Activated CD4-positive, alpha-beta memory T cell treated with anti-CD3 and anti-CD28 coated beads for 36 hours (primary cell): ENCODE measurements at regions of chr7 and their contacts with region 1.

Region 1: DNA sequence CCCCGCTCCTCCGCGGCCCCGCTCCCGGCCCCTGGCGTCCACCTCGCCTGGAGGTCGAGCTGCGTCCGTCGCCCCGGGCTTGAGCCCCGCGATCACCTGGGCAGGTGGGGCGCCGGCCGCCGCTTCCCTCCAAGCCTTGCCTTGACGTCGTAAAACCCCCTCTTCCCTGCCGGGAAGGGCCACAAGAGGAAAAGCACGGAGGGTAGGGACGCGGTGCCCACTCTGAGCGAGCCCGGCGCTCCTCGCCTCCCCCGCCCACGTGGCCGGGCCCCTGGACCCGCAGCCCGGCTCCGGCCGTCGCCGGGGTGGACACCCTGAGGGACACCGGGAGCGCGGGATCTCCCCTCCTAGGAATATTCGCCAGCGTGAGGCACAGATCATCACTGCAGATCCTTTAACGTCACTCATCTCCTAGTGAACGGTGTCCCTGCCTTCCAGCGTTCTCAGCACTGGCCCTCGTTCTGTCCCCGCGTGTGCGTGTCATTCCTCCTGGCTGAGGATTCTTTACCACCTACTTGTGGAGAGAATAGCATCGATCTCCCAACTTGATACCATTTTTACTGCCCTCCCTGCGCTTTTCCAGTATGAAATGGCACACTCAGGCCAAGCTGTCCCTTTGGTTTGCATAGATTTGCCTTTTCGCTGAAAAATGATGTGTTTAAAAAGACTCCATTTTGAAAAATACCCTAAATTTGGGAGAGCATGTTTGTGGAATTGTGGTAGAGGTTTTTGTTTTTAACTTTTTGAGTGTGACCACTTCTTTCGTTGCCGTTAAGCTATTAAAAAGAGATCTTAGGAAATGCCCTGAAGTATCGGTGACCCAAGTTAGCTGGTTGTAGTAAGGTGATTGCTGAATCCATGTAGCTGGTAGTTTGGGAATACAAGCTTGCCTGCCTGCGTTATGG is 649 bp downstream of the ACTR3B start:
- DNase-seq: peak; percentile 32
- H3K4me3 Mint-ChIP-seq: peak overlapping the region; percentile 91
- H3K27ac Mint-ChIP-seq: peak overlapping the region; percentile 80
- H3K4me1 Mint-ChIP-seq: peaks cover 17% of the 10 kb centered on the region
- H3K27me3 Mint-ChIP-seq: no peaks in the 10 kb centered on the region

Region 2: GRCh38 chr7:152675759-152676636 is 84.2 kb before region 1 on chr7 and contains the start of gene XRCC2:
- CTCF ChIA-PET with region 1: interaction called, 3 read pairs
- POLR2A ChIA-PET with region 1: no interaction called
- intact Hi-C with region 1: loop called (anchors 2 kb)
- DNase-seq: peak; percentile 95
- H3K4me3 Mint-ChIP-seq: peak within 1 kb of the TSS; percentile 90
- H3K27ac Mint-ChIP-seq: peak within 1 kb of the TSS; percentile 84
- H3K4me1 Mint-ChIP-seq: peaks cover 11% of the 10 kb centered on the region
- H3K27me3 Mint-ChIP-seq: no peaks in the 10 kb centered on the region
- total RNA-seq, gene XRCC2: 13.6 to 15.0 TPM